H1 (cell line): ENCODE measurements at regions of chr12 and their contacts with region 1.

Region 1: DNA sequence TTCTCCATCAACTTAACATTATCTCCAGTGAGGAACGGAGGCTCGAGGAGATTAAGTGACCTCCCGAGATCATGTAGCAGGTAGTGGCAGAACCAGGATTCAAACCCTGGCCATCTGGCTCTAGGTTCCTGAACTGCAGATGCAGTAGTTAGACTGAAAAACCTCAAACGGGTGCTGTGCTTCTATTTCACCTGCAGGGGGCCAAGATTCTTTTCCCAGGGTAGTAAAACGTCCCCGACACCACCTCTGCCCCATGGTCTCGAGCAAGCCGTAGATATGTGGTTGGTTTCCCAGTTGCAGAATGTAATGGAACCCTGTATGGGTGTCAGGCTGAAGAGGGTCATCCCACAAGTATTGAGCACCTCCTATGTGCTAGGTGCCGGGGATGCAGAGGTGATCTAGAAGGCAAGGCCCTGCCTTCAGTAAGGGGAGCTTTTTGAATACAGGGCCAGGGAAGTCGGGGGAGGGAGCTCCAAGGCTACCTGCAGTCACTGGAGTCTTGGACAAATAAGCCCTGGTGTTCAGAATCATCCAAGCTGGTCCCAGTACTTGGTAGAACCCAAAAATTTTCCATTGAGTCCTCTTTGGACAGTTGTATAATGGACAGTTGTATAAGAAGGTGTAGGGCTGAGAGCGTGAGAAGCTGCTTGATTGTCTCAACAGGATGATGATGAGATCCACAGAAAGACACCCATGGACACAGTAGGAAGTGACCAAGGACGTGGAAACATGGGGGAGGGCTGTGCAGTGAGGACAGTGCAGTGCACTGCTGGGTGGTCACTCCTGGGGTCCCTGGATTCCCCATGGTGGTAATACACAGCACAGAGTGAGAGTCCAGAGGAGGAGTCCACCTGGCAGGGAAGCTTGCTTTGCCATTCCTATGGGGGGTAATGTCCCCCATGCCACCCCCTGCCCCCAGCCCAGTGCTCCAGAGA is 197.2 kb downstream of the CHST11 start:
- DNase-seq: peak in 1 of 2 experiments; percentile 72
- H3K4me3 ChIP-seq: no peak overlapping the region
- H3K27ac ChIP-seq: no peak overlapping the region
- H3K4me1 ChIP-seq: peaks cover 1 to 16% (median 12%) of the 10 kb centered on the region in 4 experiments; a peak in 5 of 7 replicates
- H3K27me3 ChIP-seq: no peaks in the 10 kb centered on the region
- CTCF ChIP-seq: peak; percentile 47 to 77 (median 77)
- EP300 ChIP-seq: no peak
- POLR2A ChIP-seq: no peak
- RAD21 ChIP-seq: peak; percentile 36 to 66

Region 2: GRCh38 chr12:104638851-104639240 is 15.2 kb before region 1 on chr12:
- CTCF ChIA-PET with region 1: interaction called, 10 read pairs
- POLR2A ChIA-PET with region 1: no interaction called
- DNase-seq: no peak
- H3K4me3 ChIP-seq: no peak overlapping the region
- H3K27ac ChIP-seq: no peak overlapping the region
- H3K4me1 ChIP-seq: no peaks in the 10 kb centered on the region
- H3K27me3 ChIP-seq: no peaks in the 10 kb centered on the region
- CTCF ChIP-seq: no peak
- EP300 ChIP-seq: no peak
- POLR2A ChIP-seq: no peak
- RAD21 ChIP-seq: no peak

Region 3: DNA sequence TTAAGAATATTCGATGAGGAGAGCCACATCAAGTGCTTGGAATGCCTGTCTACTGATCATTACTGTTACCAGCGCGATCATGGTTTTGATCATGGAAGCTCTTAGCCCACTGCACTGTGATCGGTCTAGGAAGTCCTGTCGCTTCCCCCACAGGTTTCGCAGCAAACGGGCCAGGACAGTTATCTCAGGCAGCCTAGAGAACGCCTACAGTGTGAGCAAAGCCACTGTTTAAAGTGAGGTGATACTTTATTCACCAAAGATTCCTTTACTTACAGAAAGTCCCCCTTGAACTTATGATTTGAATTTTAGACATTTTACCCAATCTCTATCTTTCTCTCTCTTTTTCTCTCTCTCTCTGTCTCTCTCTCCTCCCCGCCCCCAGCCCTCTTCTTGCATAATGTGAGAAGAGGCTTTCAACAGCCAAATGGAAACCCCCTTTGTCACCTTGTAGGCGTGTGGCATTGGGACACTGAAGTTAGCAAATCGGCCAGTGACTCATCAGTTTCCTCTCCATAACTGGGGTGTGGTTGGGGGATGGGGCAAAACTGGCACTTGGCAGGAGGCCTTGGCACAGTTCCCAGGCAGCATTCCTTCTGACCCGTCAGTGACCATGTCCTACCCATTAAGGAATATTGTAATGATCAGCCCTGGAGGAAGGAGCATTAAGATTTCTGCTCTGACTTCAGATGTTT is 17.6 kb after region 1 on chr12:
- CTCF ChIA-PET with region 1: interaction called, 28 read pairs
- POLR2A ChIA-PET with region 1: interaction called, 4 read pairs
- DNase-seq: no peak
- H3K4me3 ChIP-seq: peak overlapping the region in 1 of 4 experiments; percentile 7; a peak in 1 of 8 replicates
- H3K27ac ChIP-seq: no peak overlapping the region
- H3K4me1 ChIP-seq: peaks cover 0 to 15% (median 7%) of the 10 kb centered on the region in 4 experiments; a peak in 6 of 7 replicates
- H3K27me3 ChIP-seq: no peaks in the 10 kb centered on the region
- CTCF ChIP-seq: no peak
- EP300 ChIP-seq: no peak
- POLR2A ChIP-seq: no peak
- RAD21 ChIP-seq: no peak